ENCODE measurements at regions of chr6 and their contacts with region 1.

Region 1: DNA sequence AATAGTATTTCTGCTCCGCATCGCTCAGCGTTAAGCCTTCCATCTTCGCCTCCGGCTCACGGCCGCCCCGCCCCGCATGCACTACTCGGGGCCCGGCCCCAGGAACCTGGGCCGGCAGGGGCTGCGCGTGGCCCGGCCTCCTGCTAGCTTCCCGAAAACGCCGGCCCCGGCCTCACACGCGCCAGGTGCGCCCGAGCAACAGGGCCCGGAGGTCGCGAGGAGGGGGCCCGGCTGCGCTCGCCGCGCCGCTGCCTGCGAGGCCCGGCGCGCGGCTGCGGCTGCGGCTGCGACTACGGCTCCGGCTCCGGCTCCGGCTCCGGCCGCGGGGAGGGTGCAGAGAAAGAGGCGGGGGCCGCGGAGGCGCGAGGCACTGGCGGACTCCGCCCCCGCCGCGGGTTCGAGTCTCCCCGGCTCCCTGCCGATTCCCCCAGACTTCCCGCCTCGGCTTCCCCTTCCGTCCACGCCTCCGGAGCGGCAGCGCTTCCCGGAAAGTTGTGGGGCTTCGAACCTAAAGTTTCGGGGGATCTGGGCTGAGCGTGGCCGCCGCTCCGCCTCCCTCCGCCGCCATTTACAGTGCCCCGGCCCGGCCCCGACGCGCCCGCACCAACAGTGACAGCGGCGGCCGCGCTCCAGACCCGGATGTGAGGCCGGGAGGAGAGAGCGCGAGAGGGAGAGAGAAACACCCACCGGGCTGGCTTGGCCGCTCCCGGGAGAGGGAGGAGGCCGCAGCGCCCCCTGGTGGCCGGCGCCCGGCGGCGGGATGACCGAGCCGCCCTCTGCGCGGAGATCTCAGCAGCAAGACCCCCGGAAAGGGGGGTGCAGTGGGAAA is at the start of gene REPS1:
- DNase-seq: no peak
- H3K4me3 ChIP-seq: peak within 1 kb of the TSS; percentile 77 to 87
- H3K27ac ChIP-seq: peak within 1 kb of the TSS; percentile 84
- H3K4me1 ChIP-seq: peaks cover 41% of the 10 kb centered on the region
- H3K27me3 ChIP-seq: no peaks in the 10 kb centered on the region
- CTCF ChIP-seq: peak; percentile 92 to 99 (median 97)
- POLR2A ChIP-seq: no peak
- total RNA-seq, gene REPS1: 96.5 TPM

Region 2: DNA sequence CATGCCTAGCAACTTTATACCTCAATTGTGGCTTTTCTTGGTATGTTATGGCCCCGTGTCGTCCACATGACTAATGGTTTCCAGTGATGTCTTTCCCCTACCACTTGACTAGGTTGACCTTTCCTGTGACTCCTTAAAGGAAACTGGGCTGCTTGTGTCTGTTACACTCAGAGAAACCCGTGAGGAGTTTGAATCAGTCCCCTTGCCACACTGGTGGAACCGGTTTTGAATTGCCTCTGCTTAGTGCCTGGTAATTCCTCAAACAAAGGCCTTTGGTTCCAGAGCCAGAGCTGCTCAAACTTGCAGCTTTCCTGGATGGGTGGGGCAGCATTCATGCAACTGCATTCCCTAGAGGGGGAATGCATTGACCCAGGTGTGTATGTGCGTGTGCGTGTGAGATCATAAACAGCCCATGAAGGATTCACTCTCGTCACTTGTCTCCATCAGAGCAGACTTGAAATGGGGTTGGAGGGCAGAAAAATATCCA is 170.0 kb before region 1 on chr6:
- intact Hi-C with region 1: loop called (anchors 5 kb)
- DNase-seq: peak in 1 of 2 donors; percentile 92
- H3K4me3 ChIP-seq: no peak overlapping the region
- H3K27ac ChIP-seq: peak overlapping the region; percentile 56
- H3K4me1 ChIP-seq: peaks cover 9% of the 10 kb centered on the region
- H3K27me3 ChIP-seq: no peaks in the 10 kb centered on the region
- CTCF ChIP-seq: no peak
- POLR2A ChIP-seq: no peak

Region 3: GRCh38 chr6:139429580-139430145 is 441.8 kb after region 1 on chr6:
- intact Hi-C with region 1: no loop called
- DNase-seq: no peak
- H3K4me3 ChIP-seq: no peak overlapping the region
- H3K27ac ChIP-seq: no peak overlapping the region
- H3K4me1 ChIP-seq: no peaks in the 10 kb centered on the region
- H3K27me3 ChIP-seq: no peaks in the 10 kb centered on the region
- CTCF ChIP-seq: no peak
- POLR2A ChIP-seq: no peak

Region 4: GRCh38 chr6:140225701-140226436 is 1238.0 kb after region 1 on chr6:
- intact Hi-C with region 1: no loop called
- DNase-seq: no peak
- H3K4me3 ChIP-seq: no peak overlapping the region
- H3K27ac ChIP-seq: no peak overlapping the region
- H3K4me1 ChIP-seq: no peaks in the 10 kb centered on the region
- H3K27me3 ChIP-seq: no peaks in the 10 kb centered on the region
- CTCF ChIP-seq: no peak
- POLR2A ChIP-seq: no peak